ENCODE measurements at regions of chr6 and their contacts with region 1.

Region 1: GRCh38 chr6:56359201-56359899 is 112.0 kb upstream of the COL21A1 start:
- DNase-seq: peak; percentile 80
- H3K4me3 ChIP-seq: no peak overlapping the region
- H3K27ac ChIP-seq: no peak overlapping the region
- H3K4me1 ChIP-seq: peaks cover 12% of the 10 kb centered on the region
- H3K27me3 ChIP-seq: no peaks in the 10 kb centered on the region
- CTCF ChIP-seq: peak; percentile 82

Region 2: GRCh38 chr6:56220083-56220482 is 139.3 kb before region 1 on chr6:
- CTCF ChIA-PET with region 1: no interaction called
- POLR2A ChIA-PET with region 1: no interaction called
- intact Hi-C with region 1: no loop called
- DNase-seq: peak; percentile 44
- H3K4me3 ChIP-seq: no peak overlapping the region
- H3K27ac ChIP-seq: no peak overlapping the region
- H3K4me1 ChIP-seq: peaks cover 60% of the 10 kb centered on the region
- H3K27me3 ChIP-seq: no peaks in the 10 kb centered on the region
- CTCF ChIP-seq: no peak

Region 3: DNA sequence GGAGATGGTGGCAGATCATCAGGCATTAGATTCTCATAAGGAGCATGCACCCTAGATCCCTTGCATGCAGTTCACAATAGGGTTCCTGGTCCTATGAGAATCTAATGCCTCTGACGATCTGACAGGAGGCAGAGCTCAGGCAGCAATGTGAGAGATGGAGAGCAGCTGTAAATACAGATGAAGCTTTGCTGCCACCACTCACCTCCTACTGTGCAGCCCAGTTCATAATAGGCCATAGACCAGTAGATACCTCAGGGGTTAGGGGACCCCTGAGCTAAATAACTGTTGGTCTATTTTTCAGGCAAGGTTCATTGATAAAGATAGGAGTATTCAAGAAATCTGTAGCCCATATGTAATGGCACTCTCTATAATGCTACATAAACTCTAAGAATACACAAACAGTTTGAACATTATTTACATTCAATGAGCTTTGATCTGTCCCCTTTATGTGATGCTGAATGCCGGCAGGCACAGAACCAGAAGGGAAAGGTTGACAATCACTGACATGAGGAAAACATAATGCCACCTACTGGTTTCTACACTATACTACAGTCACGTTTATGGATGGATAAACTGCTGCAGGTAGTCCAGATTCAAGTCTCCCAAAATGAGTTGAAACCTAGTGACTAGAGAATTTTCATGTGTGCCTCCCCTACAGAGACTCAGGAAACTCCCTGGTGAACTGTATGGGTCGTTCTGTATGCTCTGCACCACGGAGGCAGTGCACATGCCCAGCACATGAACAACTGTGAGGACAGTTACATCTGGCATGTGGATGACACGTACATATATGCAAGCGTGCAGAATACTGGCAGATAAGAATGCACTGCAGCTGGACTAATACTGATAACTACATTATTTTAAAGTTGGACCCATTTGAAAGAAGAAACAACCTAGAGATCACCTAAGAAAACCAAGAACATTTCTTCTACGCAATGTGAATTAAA is 211.3 kb after region 1 on chr6:
- CTCF ChIA-PET with region 1: interaction called, 3 read pairs
- POLR2A ChIA-PET with region 1: no interaction called
- intact Hi-C with region 1: loop called (anchors 2 kb)
- DNase-seq: peak; percentile 56
- H3K4me3 ChIP-seq: no peak overlapping the region
- H3K27ac ChIP-seq: no peak overlapping the region
- H3K4me1 ChIP-seq: peaks cover 6% of the 10 kb centered on the region
- H3K27me3 ChIP-seq: no peaks in the 10 kb centered on the region
- CTCF ChIP-seq: peak; percentile 73

Region 4: DNA sequence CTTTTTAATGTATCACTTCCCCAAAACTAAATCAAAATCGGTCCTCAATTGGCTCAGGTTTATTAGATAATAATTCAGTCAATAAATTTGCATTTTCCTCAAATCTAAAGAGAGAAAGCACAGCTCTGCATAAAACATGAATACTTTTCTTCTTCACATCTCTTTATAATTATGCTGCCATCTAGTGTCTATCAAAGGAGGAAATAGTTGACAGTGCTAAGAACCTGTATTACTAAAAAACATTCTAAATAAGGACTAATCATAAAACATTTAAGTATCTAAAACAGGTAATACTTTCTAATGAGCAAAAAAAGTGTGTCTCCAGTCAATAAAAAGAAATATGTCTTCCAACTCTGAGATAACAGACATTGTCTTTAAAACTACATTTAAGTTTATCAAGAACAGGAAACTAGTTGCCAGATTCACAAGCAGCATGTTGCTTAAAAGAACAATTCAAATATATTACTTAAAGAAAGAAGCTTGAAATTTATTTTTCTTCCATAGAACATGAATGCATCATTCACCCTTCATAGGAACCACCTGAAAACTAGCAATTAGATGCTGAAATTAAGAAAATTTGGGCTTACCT is 339.8 kb after region 1 on chr6:
- CTCF ChIA-PET with region 1: no interaction called
- POLR2A ChIA-PET with region 1: no interaction called
- intact Hi-C with region 1: loop called (anchors 5 kb)
- DNase-seq: peak; percentile 60
- H3K4me3 ChIP-seq: no peak overlapping the region
- H3K27ac ChIP-seq: no peak overlapping the region
- H3K4me1 ChIP-seq: no peaks in the 10 kb centered on the region
- H3K27me3 ChIP-seq: no peaks in the 10 kb centered on the region
- CTCF ChIP-seq: peak; percentile 74